Dendritic cell treated with granulocyte-macrophage colony-stimulating factor and Interleukin-4, amounts not matched to agents 40 ng/mL and 50 ng/mL, for 4 days (primary cell): ENCODE measurements at regions of chr9 and their contacts with region 1.

Region 1: GRCh38 chr9:82532504-82533180 is 530.3 kb downstream of the RASEF start:
- H3K4me3 Mint-ChIP-seq: no peak overlapping the region
- H3K27ac Mint-ChIP-seq: no peak overlapping the region
- H3K4me1 Mint-ChIP-seq: no peaks in the 10 kb centered on the region
- H3K27me3 Mint-ChIP-seq: no peaks in the 10 kb centered on the region

Region 2: DNA sequence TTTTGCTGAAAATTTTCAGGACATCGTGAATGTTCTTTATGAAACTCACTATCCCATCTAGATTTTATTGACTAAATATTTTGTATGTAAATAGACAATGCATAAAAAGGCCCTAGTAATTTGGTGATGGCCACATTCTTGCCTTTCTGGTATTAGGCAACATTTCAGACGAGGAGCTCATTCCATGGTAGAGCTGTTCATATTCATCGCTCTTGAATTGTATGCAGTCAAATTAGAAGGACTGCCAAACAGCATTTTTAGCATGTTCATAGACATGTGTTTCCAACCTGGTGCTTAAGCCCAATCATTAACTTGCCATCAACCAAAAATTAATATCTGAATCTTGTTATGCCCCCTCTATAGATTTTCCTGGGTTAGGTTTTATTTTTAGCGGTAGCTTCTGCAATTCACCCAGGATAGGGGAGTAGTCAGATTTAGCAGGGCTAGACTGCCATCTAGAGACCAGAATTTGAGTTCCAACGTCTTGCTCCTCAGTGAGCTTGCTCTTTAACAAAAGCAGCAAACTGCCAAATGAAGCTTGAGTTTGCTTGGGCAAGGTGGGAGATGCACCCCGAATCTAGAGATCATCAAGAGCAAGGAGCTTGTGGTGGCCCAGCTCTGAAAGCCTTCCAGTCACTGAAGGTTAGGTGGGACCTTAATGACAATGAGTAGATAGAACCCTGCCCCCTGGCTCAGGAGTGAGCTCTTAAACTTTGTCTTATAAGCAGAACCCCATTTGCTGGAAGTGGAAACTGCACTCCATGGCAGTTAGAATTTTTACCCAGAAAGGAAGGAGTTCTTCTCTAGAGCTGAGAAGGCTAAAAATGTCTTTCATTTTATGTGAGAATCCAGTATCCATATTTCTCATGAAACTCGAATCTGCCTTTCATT is 74.1 kb after region 1 on chr9:
- intact Hi-C with region 1: loop called (anchors 5 kb)
- H3K4me3 Mint-ChIP-seq: no peak overlapping the region
- H3K27ac Mint-ChIP-seq: no peak overlapping the region
- H3K4me1 Mint-ChIP-seq: no peaks in the 10 kb centered on the region
- H3K27me3 Mint-ChIP-seq: no peaks in the 10 kb centered on the region

Region 3: GRCh38 chr9:82721593-82721992 is 189.0 kb after region 1 on chr9:
- intact Hi-C with region 1: no loop called
- H3K4me3 Mint-ChIP-seq: no peak overlapping the region
- H3K27ac Mint-ChIP-seq: no peak overlapping the region
- H3K4me1 Mint-ChIP-seq: no peaks in the 10 kb centered on the region
- H3K27me3 Mint-ChIP-seq: no peaks in the 10 kb centered on the region